Vagina (tissue), 2 donors: ENCODE measurements at regions of chr5 and their contacts with region 1.

Region 1: GRCh38 chr5:72486371-72486770 is 20.8 kb downstream of the ZNF366 start:
- DNase-seq: no peak
- H3K4me3 ChIP-seq: no peak overlapping the region
- H3K27ac ChIP-seq: no peak overlapping the region
- H3K4me1 ChIP-seq: peaks cover 18% of the 10 kb centered on the region
- H3K27me3 ChIP-seq: no peaks in the 10 kb centered on the region
- CTCF ChIP-seq: no peak
- POLR2A ChIP-seq: no peak

Region 2: GRCh38 chr5:72410688-72411295 is 75.6 kb before region 1 on chr5:
- intact Hi-C with region 1: loop called (anchors 2 kb)
- DNase-seq: no peak
- H3K4me3 ChIP-seq: no peak overlapping the region
- H3K27ac ChIP-seq: no peak overlapping the region
- H3K4me1 ChIP-seq: no peaks in the 10 kb centered on the region
- H3K27me3 ChIP-seq: no peaks in the 10 kb centered on the region
- CTCF ChIP-seq: no peak
- POLR2A ChIP-seq: no peak

Region 3: GRCh38 chr5:73687357-73687756 is 1201.0 kb after region 1 on chr5:
- intact Hi-C with region 1: no loop called
- DNase-seq: no peak
- H3K4me3 ChIP-seq: no peak overlapping the region
- H3K27ac ChIP-seq: no peak overlapping the region
- H3K4me1 ChIP-seq: no peaks in the 10 kb centered on the region
- H3K27me3 ChIP-seq: no peaks in the 10 kb centered on the region
- CTCF ChIP-seq: no peak
- POLR2A ChIP-seq: no peak